IMR-90 (cell line): ENCODE measurements at regions of chr5 and their contacts with region 1.

Region 1: DNA sequence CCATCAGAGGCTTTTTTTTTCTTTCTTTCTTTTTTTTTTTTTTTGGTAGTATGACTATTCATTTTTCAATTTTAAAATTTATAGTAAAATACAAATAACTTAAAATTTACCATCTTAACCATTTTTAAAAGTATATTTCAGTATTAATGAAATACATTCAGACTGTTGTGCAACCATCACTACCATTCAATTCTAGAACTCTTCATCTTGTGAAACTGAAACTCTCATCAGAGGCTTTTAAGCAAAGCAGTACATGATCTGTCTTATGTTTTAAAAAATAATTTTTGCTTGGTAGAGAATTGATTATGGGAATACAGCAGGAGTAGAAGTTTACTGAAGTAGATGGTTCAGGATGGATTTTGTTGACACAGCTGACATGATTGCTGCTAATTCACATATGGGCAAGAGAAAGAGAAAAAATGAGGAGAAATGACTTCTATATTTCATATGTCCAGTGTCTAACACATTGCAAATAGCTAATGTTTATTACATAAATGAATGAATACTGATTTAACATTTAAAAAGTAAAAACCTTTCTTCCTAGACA is 13.4 kb downstream of the ELOVL7 start:
- DNase-seq: no peak
- ATAC-seq: no peak
- H3K4me3 ChIP-seq: no peak overlapping the region
- H3K27ac ChIP-seq: no peak overlapping the region
- H3K4me1 ChIP-seq: no peaks in the 10 kb centered on the region
- H3K27me3 ChIP-seq: no peaks in the 10 kb centered on the region
- CTCF ChIP-seq: no peak
- POLR2A ChIP-seq: no peak
- RAD21 ChIP-seq: no peak

Region 2: DNA sequence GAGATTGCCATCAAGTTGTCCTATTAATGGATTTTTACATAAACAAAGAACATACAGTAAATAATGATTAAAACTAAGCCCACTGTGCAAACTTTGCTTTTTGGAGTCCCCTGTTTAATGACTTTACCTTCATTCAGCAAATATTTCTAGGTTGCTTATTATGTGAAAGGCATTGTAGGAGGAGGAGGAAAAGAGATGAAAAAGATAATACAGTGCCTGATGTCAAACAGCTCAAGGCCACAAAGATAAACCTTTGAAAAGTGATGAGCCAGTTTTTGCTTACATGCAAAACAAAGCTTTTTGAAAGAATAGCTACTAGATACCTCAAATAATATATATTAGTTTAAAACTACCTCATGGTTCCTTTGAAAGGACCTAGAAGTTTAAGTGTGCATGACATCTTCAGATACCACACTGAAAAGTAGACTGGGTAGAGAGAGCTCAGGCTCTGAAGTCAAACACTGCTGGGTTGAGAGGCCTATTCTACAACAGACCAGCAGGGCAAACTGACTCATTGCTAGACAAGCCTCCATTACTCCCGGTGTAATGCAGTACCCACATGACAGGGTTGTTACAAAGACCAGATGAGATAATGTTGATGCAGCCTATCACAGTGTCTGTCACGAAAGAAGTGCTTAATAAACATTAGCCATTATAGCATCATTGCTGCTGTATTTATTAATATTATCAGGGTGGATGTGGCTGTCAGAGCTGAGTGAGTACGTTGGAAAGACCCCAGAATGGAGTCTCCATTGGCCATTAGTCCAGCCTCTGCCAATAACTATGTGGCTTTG is 142.5 kb before region 1 on chr5:
- CTCF ChIA-PET with region 1: interaction called, 10 read pairs
- POLR2A ChIA-PET with region 1: no interaction called
- dilution Hi-C with region 1: no loop called
- in situ Hi-C with region 1: no loop called
- intact Hi-C with region 1: no loop called
- DNase-seq: peak; percentile 75
- ATAC-seq: peak; percentile 97
- H3K4me3 ChIP-seq: no peak overlapping the region
- H3K27ac ChIP-seq: no peak overlapping the region
- H3K4me1 ChIP-seq: no peaks in the 10 kb centered on the region
- H3K27me3 ChIP-seq: no peaks in the 10 kb centered on the region
- CTCF ChIP-seq: peak; percentile 40
- POLR2A ChIP-seq: no peak
- RAD21 ChIP-seq: no peak